ENCODE measurements at regions of chr2 and their contacts with region 1.

Region 1: GRCh38 chr2:46923041-46923528 is 7.5 kb upstream of the MCFD2 start:
- DNase-seq: no peak
- H3K4me3 ChIP-seq: no peak overlapping the region
- H3K27ac ChIP-seq: no peak overlapping the region
- H3K4me1 ChIP-seq: peaks cover 23% of the 10 kb centered on the region
- H3K27me3 ChIP-seq: no peaks in the 10 kb centered on the region
- CTCF ChIP-seq: no peak
- POLR2A ChIP-seq: no peak

Region 2: GRCh38 chr2:46937471-46937901 is 14.4 kb after region 1 on chr2:
- CTCF ChIA-PET with region 1: interaction called, 27 read pairs
- POLR2A ChIA-PET with region 1: no interaction called
- dilution Hi-C with region 1: no loop called
- intact Hi-C with region 1: no loop called
- DNase-seq: no peak
- H3K4me3 ChIP-seq: no peak overlapping the region
- H3K27ac ChIP-seq: no peak overlapping the region
- H3K4me1 ChIP-seq: peaks cover 11% of the 10 kb centered on the region
- H3K27me3 ChIP-seq: no peaks in the 10 kb centered on the region
- CTCF ChIP-seq: peak; percentile 15 to 32
- POLR2A ChIP-seq: no peak

Region 3: DNA sequence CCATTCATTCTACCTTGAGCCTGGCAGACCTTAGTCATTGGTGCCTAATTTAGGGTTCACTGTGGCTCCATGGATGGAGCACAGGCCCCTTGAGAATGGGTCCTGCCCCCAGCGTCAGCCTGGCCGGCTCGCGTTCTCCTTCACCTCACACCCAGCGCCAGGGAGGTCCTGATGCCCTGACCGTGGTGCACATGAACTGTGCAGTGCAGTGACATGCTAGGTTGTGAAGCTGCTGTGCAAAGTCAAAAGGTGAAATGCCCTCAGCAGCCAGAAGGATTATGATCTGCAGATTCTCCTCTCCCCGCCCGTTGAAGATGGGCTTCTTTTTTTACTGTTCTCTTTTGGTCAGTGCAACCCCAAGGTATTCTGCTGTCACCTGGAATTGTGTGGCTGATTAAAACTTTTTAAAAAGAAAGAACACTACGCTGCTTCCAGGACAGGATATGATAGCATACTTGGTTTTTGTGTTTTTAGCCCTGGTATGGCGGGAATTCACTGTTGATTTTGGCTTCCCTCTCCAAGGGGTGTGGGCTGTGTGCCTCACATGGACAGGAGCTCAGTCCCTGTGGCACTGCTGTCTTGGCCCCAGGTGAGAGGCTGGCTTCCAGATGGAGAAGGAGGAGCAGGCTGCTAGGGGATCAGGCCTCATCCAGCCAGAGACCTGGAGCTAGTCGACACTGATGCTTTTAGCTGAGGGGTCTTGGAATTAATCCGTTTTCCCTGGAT is 41.9 kb after region 1 on chr2:
- CTCF ChIA-PET with region 1: interaction called, 4 read pairs
- POLR2A ChIA-PET with region 1: no interaction called
- dilution Hi-C with region 1: no loop called
- intact Hi-C with region 1: loop called (anchors 2 kb)
- DNase-seq: peak; percentile 59
- H3K4me3 ChIP-seq: no peak overlapping the region
- H3K27ac ChIP-seq: peak overlapping the region; percentile 4
- H3K4me1 ChIP-seq: peaks cover 33% of the 10 kb centered on the region
- H3K27me3 ChIP-seq: no peaks in the 10 kb centered on the region
- CTCF ChIP-seq: no peak
- POLR2A ChIP-seq: no peak

Region 4: GRCh38 chr2:47512581-47513083 is 589.5 kb after region 1 on chr2:
- CTCF ChIA-PET with region 1: no interaction called
- POLR2A ChIA-PET with region 1: no interaction called
- dilution Hi-C with region 1: no loop called
- intact Hi-C with region 1: no loop called
- DNase-seq: peak; percentile 28
- H3K4me3 ChIP-seq: no peak overlapping the region
- H3K27ac ChIP-seq: no peak overlapping the region
- H3K4me1 ChIP-seq: peaks cover 18% of the 10 kb centered on the region
- H3K27me3 ChIP-seq: no peaks in the 10 kb centered on the region
- CTCF ChIP-seq: no peak
- POLR2A ChIP-seq: no peak

Measured in endothelial cell of umbilical vein (primary cell).